Activated B cell treated with CpG ODN at 0.5 μM for 24 hours (primary cell): ENCODE measurements at regions of chr11 and their contacts with region 1.

Region 1: GRCh38 chr11:34997952-34998528 is 81.6 kb downstream of the PDHX start:
- DNase-seq: no peak
- ATAC-seq: peak; percentile 64
- H3K4me3 Mint-ChIP-seq: peak overlapping the region; percentile 52
- H3K27ac Mint-ChIP-seq: peak overlapping the region; percentile 77
- H3K4me1 Mint-ChIP-seq: peaks cover 31% of the 10 kb centered on the region
- H3K27me3 Mint-ChIP-seq: no peaks in the 10 kb centered on the region
- CTCF ChIP-seq: peak; percentile 58

Region 2: DNA sequence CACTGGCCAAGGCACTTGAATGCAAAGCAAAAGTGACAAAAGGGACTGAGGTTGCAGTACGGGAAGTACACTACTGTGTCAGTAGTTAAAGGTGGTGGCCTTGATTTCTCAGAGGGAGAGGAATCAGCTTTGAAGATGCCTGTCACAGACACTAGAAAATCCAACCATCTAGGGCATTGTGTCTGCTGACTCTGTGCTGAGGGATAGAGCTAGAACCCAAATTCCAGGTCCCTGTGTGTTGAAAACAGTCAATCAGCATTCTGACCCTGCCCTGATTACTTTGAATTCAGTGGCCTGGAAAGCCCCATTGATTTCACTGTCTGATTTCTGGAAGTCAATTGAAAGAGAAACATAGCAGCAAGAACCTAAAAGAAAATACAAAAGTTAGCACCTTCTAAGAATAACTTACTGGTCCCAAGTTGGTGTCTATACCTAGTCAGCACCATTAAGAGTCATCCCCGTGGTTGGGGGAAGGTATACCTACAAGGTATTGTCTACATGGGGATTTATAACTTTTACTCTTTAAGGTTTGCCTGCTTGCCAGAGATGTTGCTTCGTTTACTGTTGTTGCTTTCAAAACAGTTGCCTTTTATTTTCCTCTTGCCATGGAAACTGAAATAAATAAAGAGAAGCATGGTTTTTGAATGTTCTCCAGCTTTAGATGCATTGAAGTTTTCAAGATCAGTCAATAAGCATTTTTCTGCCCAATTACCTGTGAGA is 15.6 kb after region 1 on chr11:
- CTCF ChIA-PET with region 1: interaction called, 5 read pairs
- POLR2A ChIA-PET with region 1: interaction called, 11 read pairs
- intact Hi-C with region 1: loop called (anchors 2 kb)
- DNase-seq: no peak
- ATAC-seq: peak; percentile 47
- H3K4me3 Mint-ChIP-seq: peak overlapping the region; percentile 59
- H3K27ac Mint-ChIP-seq: peak overlapping the region; percentile 90
- H3K4me1 Mint-ChIP-seq: peaks cover 43% of the 10 kb centered on the region
- H3K27me3 Mint-ChIP-seq: no peaks in the 10 kb centered on the region
- CTCF ChIP-seq: no peak

Region 3: DNA sequence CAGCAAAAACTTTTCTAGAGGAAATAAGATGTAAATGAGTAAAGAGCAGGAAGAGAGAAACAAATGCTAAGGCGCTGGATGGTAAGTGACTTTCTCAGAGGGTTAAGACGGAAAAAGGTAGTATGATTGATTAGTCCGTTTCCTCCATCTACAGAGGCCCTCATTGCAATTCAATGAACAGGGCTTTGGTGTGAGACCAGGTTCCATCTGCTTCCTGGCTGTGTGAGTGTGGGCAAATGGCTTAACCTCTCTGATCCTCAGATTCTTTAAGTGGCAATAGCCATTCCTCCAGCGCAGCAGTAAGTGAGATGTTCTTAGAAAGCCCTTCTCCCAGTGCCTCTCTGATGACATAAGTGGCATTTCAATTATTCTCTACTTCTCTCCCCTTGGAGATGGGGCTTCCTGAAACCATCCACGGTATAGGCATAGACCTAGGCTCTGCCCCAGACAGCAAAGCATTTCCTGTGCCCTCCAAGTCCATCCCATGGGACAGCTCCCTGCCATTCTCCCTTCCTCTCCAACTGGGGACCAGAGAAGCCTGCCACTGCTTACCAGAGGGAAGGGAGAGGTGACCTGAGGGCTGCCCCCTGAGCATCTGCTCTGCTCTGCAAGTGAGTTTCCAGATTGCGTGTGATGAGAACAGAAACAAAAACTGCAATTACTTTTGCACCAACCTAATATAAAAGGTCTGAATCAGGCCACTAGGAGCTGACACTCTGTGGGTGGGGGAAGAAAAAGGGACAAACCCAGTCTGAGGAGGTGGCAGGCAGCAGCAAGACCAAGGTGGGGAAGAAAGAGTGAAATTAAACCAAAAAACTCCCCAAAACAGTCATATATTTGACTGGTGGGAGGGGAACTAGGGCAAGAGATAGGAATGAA is 128.2 kb after region 1 on chr11:
- CTCF ChIA-PET with region 1: interaction called, 4 read pairs
- POLR2A ChIA-PET with region 1: interaction called, 3 read pairs
- intact Hi-C with region 1: loop called (anchors 1 kb)
- DNase-seq: peak; percentile 49
- ATAC-seq: peak; percentile 71
- H3K4me3 Mint-ChIP-seq: peak overlapping the region; percentile 76
- H3K27ac Mint-ChIP-seq: peak overlapping the region; percentile 97
- H3K4me1 Mint-ChIP-seq: peaks cover 85% of the 10 kb centered on the region
- H3K27me3 Mint-ChIP-seq: no peaks in the 10 kb centered on the region
- CTCF ChIP-seq: no peak

Region 4: GRCh38 chr11:35165423-35166368 is 167.7 kb after region 1 on chr11:
- CTCF ChIA-PET with region 1: interaction called, 12 read pairs
- POLR2A ChIA-PET with region 1: interaction called, 5 read pairs
- intact Hi-C with region 1: loop called (anchors 1 kb)
- DNase-seq: peak; percentile 55
- ATAC-seq: peak; percentile 68
- H3K4me3 Mint-ChIP-seq: peak overlapping the region; percentile 76
- H3K27ac Mint-ChIP-seq: peak overlapping the region; percentile 91
- H3K4me1 Mint-ChIP-seq: peaks cover 100% of the 10 kb centered on the region
- H3K27me3 Mint-ChIP-seq: no peaks in the 10 kb centered on the region
- CTCF ChIP-seq: no peak

Region 5: DNA sequence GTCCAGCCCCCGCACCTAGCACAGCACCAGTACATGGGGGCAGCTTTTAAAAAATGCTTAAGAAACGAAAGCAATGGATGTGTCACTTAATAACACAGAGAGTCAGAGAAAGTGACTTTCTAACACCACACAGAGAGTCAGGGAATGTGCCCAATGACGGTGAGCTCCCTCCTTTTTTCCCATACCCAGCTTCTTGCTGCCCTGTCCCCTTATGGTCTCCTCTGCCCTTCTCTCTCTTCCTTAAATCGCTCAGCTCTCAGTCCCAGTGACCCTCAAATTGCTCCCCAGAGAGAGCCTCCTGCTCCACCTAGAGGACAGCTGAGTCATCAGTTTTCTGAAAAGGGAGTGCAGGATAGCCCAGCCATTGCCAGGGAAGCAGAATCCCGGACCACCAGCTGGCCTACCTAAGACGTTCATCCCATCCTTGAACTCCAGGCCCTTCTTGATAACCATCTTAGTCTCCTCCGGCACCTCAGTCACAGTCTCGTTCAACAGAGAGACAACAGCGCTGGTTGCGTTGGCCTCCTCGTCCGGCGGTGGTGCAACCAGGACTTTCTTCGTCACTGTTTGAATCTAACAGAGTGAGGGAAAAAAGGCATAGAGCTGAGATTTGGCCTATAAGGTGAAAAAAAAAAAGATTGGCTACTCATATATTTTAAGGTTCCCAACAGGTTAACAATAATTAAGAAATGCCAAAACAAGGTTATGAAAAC is 307.8 kb after region 1 on chr11:
- CTCF ChIA-PET with region 1: interaction called, 4 read pairs
- POLR2A ChIA-PET with region 1: no interaction called
- intact Hi-C with region 1: loop called (anchors 1 kb)
- DNase-seq: no peak
- ATAC-seq: peak; percentile 69
- H3K4me3 Mint-ChIP-seq: no peak overlapping the region
- H3K27ac Mint-ChIP-seq: no peak overlapping the region
- H3K4me1 Mint-ChIP-seq: peaks cover 13% of the 10 kb centered on the region
- H3K27me3 Mint-ChIP-seq: no peaks in the 10 kb centered on the region
- CTCF ChIP-seq: no peak

Region 6: GRCh38 chr11:35683728-35684339 is 685.8 kb after region 1 on chr11:
- CTCF ChIA-PET with region 1: no interaction called
- POLR2A ChIA-PET with region 1: no interaction called
- intact Hi-C with region 1: no loop called
- DNase-seq: no peak
- ATAC-seq: peak; percentile 83
- H3K4me3 Mint-ChIP-seq: no peak overlapping the region
- H3K27ac Mint-ChIP-seq: no peak overlapping the region
- H3K4me1 Mint-ChIP-seq: peaks cover 65% of the 10 kb centered on the region
- H3K27me3 Mint-ChIP-seq: no peaks in the 10 kb centered on the region
- CTCF ChIP-seq: no peak